ENCODE measurements at regions of chr4 and their contacts with region 1.

Region 1: GRCh38 chr4:113741956-113742355 is 19.6 kb downstream of the CAMK2D start:
- DNase-seq: no peak
- H3K4me3 ChIP-seq: no peak overlapping the region
- H3K4me3 Mint-ChIP-seq: peak overlapping the region in 1 of 8 donors; percentile 3
- H3K27ac ChIP-seq: no peak overlapping the region
- H3K27ac Mint-ChIP-seq: peak overlapping the region in 5 of 7 donors; percentile 2 to 20 (median 7)
- H3K4me1 ChIP-seq: peaks cover 28% of the 10 kb centered on the region
- H3K4me1 Mint-ChIP-seq: peaks cover 24 to 36% (median 26%) of the 10 kb centered on the region in 4 donors
- H3K27me3 ChIP-seq: no peaks in the 10 kb centered on the region
- H3K27me3 Mint-ChIP-seq: no peaks in the 10 kb centered on the region

Region 2: DNA sequence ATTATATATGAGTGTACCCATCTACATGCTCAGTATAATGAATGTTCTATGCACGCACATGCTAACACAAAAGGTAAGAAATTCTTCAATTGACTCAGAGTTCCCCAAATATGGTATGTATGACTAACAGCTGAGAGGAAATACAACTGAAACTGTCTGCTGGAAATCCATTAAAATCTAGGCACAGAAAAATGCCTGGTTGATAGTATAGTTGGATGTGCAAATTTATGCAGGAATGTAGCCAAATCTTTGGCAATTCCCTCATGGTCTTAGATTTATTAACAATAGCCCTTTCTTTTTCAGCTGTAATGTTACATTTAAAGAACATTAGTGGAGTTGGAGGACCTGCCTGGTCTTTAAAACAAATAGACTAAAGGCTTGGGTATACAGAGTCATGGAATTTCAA is 14.1 kb after region 1 on chr4:
- CTCF ChIA-PET with region 1: interaction called, 3 read pairs
- POLR2A ChIA-PET with region 1: interaction called, 6 read pairs
- intact Hi-C with region 1: loop called (anchors 2 kb)
- DNase-seq: no peak
- H3K4me3 ChIP-seq: no peak overlapping the region
- H3K4me3 Mint-ChIP-seq: peak overlapping the region in 3 of 8 donors; percentile 1 to 39 (median 20)
- H3K27ac ChIP-seq: no peak overlapping the region
- H3K27ac Mint-ChIP-seq: peak overlapping the region in 1 of 7 donors; percentile 3
- H3K4me1 ChIP-seq: peaks cover 43% of the 10 kb centered on the region
- H3K4me1 Mint-ChIP-seq: peaks cover 25 to 66% (median 34%) of the 10 kb centered on the region in 4 donors
- H3K27me3 ChIP-seq: no peaks in the 10 kb centered on the region
- H3K27me3 Mint-ChIP-seq: no peaks in the 10 kb centered on the region